Activated CD4-positive, alpha-beta T cell treated with anti-CD3 and anti-CD28 coated beads for 36 hours (primary cell): ENCODE measurements at regions of chr16 and their contacts with region 1.

Region 1: DNA sequence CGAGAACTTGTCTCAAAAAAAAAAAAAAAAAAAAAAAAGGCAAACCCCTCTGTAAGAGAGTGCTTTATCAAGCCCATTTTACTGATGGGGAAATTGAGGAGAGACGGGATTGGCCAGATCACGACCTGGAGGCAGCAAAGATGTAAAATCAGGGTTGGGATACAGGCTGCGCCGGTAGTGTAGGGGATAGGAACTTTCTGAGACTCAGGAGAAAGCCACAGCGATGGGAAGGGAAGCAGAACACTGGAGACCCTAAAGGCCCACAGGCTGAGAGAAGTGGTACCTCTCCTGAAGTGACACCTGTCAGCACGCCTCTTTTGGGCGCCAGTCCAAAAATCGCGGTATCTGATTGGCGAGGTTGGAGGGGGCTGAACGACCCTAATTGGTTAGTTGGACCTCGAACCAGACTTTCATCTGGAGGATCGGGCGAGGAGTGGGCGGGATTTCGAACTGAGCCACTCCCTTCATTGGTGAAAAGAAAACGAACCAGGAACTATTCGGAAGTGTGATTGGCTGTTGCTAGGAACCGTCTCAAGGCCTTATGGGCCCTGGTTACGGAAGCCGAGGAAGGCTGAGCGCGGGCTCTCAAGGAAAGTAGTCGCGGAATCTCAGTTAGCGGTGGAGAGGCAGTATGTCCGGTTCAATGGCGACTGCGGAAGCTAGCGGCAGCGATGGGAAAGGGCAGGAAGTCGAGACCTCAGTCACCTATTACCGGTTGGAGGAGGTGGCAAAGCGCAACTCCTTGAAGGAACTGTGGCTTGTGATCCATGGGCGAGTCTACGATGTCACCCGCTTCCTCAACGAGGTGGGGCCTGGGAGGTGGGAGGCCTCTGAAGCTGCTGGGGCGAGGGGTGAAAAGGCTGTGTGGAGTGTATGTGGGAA is at the start of gene CYB5B:
- DNase-seq: peak; percentile 98
- ATAC-seq: peak; percentile 97
- H3K4me3 Mint-ChIP-seq: peak within 1 kb of the TSS; percentile 96
- H3K27ac Mint-ChIP-seq: peak within 1 kb of the TSS; percentile 93
- H3K4me1 Mint-ChIP-seq: peaks cover 35% of the 10 kb centered on the region
- H3K27me3 Mint-ChIP-seq: no peaks in the 10 kb centered on the region
- total RNA-seq, gene CYB5B: 158 to 187 TPM

Region 2: DNA sequence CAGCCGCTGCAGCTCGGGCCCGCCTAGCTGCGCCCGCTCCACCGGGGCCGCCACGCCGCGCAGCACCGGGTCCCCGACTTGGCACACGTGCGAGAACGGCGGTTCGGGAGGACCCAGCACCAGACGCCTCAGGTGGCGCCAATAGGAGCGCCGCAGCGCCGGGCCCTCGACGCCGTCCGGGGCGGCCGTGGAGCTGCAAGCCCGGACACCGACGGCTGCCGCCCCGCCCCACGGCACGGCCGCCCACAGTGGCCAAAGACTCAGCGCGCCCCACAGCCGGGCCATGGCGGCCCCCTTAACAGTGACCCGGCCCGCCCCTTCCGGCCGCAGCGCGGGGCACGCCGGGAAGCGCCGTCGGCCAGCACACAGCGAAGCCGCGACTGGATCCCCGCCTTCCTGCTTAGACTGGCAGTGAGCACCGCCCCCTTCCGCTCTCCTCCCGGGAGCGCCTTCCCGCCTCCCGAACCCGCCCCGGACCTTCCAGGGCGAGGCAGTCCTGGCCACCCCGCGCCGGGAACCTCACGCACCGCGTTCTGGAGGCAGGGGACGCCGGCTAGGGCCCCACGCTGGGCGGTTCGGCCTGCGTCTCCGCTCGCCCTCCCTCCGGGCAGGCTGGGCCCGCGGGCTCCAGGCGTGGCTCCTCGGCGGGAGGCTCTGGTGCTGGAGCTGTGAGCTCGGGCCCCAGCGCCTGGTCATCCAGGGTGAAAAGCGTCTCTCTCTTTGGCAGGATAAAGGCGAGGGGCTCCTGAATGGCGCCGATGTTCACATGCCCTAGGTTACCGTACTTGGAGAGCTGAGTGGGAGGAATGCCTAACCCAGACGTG is 93.8 kb before region 1 on chr16 and contains the start of gene PDF:
- CTCF ChIA-PET with region 1: no interaction called
- POLR2A ChIA-PET with region 1: no interaction called
- intact Hi-C with region 1: loop called in 1 of 2 experiments (anchors 1 kb)
- DNase-seq: peak; percentile 90
- ATAC-seq: peak; percentile 94
- H3K4me3 Mint-ChIP-seq: peak within 1 kb of the TSS; percentile 83
- H3K27ac Mint-ChIP-seq: peak within 1 kb of the TSS; percentile 84
- H3K4me1 Mint-ChIP-seq: peaks cover 45% of the 10 kb centered on the region
- H3K27me3 Mint-ChIP-seq: no peaks in the 10 kb centered on the region
- total RNA-seq, gene PDF: 10.1 to 19.9 TPM

Region 3: GRCh38 chr16:69339289-69340108 is 84.8 kb before region 1 on chr16 and contains the starts of genes COG8 and NIP7:
- CTCF ChIA-PET with region 1: interaction called, 3 read pairs
- POLR2A ChIA-PET with region 1: no interaction called
- intact Hi-C with region 1: loop called in 1 of 2 experiments (anchors 1 kb)
- DNase-seq: peak; percentile 95
- ATAC-seq: peak; percentile 89
- H3K4me3 Mint-ChIP-seq: peak within 1 kb of the TSS; percentile 96
- H3K27ac Mint-ChIP-seq: peak within 1 kb of the TSS; percentile 98
- H3K4me1 Mint-ChIP-seq: peaks cover 37% of the 10 kb centered on the region
- H3K27me3 Mint-ChIP-seq: no peaks in the 10 kb centered on the region
- total RNA-seq, gene COG8: 30.0 to 30.3 TPM
- total RNA-seq, gene NIP7: 39.1 to 41.3 TPM

Region 4: GRCh38 chr16:69396187-69397061 is 27.9 kb before region 1 on chr16:
- CTCF ChIA-PET with region 1: interaction called, 8 read pairs
- POLR2A ChIA-PET with region 1: no interaction called
- intact Hi-C with region 1: loop called in 1 of 2 experiments (anchors 1 kb)
- DNase-seq: peak; percentile 83
- ATAC-seq: peak; percentile 63
- H3K4me3 Mint-ChIP-seq: no peak overlapping the region
- H3K27ac Mint-ChIP-seq: peak overlapping the region; percentile 70
- H3K4me1 Mint-ChIP-seq: peaks cover 20% of the 10 kb centered on the region
- H3K27me3 Mint-ChIP-seq: no peaks in the 10 kb centered on the region